GM10248 (cell line): ENCODE measurements at regions of chr9 and their contacts with region 1.

Region 1: DNA sequence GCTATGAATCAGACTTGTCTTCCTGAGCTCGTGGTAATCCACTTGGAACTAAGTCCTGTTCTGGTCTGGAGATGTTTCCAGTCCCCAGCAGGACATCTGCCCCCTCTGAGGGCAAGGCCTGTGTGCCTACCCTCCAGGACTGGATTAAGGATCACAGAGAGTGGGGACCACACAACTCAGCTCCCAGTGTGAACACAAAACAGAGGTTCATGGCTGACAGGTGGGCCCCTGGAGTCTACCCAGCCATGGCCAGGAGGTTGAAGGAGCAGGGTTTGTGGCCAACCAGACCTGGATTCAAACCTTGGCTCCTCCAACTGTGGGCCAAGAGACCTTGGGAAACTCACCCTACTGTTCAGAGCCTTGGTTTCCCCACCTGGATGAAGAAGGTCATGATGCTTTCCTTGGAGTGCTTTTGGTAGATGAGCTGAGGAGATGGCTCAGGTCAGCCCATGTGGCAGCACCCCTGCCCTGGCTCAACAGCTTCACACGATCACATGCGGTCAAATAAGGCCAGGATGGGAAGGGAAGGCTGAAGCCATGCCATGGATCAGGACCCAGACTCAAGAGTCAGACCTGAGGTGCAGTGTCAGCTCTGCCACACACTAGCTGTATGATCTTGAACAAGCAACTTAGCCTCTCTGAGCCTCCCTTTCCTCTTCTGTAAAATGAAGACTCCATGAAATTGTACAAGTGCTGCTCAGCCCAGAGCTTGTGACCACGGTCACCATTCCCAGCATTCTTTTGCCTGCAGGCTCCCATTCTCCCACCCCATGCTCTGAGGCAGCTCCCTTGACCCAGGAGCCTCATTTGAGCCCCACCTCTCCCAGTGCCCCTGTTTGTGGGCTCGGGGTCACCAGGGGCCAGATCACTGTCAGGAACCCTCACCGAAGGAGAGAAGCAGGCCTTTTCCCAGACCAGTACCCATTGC is 27.3 kb upstream of the ANGPTL2 start:
- DNase-seq: no peak
- CTCF ChIP-seq: no peak

Region 2: DNA sequence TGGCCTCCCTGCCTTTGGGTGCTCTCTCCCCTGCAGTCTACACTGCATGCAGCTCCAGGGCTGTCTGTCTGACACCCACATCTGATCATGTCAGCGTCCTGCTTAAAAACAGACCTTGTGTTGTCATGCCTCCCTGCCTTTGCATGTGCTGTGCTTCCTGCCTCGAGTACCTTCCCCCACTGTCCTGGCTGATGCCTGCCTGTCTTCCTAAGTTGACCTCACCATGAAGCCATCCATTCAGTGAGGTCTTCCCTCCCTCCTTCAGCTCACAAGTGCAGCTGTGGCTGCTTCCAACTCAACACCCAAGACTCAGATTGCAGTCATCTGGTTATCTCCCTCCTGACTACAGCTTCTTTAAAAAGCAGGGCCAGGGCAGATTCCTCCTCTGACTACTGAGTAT is 32.8 kb before region 1 on chr9:
- CTCF ChIA-PET with region 1: no interaction called
- POLR2A ChIA-PET with region 1: no interaction called
- DNase-seq: no peak
- CTCF ChIP-seq: no peak

Region 3: DNA sequence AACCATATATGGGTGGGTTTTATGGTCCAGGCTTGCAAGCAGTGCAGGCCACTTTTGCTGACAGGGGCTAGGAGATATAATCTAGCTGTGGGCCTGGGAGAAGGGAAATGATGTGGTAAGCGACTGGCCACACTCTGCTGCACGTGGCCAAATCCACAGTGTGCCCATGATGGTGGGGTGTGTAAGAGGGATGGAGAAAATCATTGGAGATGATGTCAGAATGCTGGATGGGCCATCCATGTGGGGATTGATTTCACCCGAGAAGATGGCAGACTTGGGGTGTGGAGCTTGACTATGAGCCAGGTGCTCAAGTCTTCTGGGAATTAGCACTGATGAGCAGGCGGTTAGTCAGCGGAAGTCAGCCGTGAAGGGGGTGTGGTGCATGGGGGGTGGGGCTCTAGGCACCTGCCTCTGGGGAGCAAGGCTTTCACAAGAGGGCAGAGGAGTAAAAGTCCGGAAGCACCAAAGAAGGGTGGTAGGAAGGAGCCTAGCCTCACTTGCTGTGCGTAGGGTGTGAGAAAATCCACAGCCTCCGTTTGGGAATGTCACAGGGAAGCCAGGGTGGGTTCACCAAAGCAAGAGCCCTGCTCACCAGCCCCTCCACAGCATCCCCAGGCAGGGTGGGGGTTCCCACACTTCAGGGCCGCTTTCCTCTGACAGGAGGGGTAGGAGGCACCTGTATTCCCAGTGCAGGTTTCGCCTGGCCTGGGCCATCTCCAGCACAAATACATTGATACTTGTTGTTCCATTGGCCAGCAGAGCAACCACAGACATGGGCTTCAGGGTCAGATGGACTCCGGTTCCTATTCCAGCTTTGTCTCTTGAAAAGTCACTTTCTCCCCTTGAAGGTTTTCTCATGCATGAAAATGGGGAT is 17.2 kb after region 1 on chr9:
- CTCF ChIA-PET with region 1: interaction called, 11 read pairs
- POLR2A ChIA-PET with region 1: interaction called, 6 read pairs
- DNase-seq: peak; percentile 77
- CTCF ChIP-seq: no peak